ENCODE measurements at regions of chr17 and their contacts with region 1.

Region 1: DNA sequence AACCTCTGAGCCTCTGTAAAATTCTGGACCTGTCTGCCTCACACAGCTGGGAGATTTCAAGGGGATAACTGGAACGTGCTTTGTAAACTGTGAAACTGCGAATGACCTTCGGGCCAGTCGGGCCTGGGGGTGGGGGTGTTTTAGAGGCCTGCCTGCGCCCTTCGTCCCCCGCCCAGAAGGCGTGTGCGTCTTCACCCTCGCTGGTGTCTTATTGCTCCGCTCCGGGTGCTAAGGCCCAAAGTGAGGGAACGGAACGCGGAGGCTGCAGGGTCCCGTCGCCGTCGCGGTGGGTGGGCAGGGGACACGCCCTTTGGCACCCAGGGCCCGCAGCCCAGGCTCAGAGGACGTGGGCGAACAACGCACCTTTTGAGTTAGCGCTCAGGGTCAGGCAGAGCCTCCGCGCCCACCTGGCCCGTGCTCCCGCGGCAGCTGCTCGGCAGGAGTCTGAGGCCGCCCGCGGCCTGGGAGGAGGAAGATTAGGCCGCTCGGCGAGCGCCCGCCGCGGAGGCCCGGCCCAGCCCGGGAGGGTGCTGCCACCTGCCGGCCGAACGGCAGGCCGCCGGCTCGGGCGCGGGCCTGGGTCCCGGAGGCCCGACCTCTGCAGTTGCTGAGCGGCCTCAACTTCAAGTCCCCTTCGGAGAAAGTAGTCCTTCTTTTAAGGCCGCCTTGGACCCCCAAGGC is 29.7 kb downstream of the DCAKD start:
- DNase-seq: peak; percentile 44 to 81
- ATAC-seq: peak; percentile 76 to 86 (median 80)
- H3K4me3 ChIP-seq: peak overlapping the region; percentile 4 to 61 (median 53)
- H3K27ac ChIP-seq: peak overlapping the region in 9 of 10 donors; percentile 61 to 81 (median 71)
- H3K4me1 ChIP-seq: peaks cover 13 to 46% (median 38%) of the 10 kb centered on the region in 9 donors
- H3K27me3 ChIP-seq: peaks cover 0 to 44% (median 0%) of the 10 kb centered on the region in 7 donors
- CTCF ChIP-seq: peak; percentile 77 to 99 (median 92)

Region 2: DNA sequence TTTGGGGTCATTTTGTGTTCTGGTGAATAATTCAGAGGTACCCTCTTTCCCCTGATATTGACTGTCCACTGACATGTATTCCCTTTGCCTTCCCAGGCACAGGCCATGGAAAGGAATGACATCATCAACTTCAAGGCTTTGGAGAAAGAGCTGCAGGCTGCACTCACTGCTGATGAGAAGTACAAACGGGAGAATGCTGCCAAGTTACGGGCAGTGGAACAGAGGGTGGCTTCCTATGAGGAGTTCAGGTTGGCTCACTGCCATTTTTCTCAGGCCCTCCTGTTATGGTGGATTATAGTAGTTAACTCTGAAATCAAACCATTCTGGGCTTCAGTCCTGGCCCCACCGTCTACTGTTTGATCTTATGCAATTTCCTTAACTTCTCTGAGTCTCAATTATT is 120.9 kb before region 1 on chr17:
- intact Hi-C with region 1: loop called in 1 of 10 experiments (anchors 5 kb)
- DNase-seq: no peak
- ATAC-seq: no peak
- H3K4me3 ChIP-seq: no peak overlapping the region
- H3K27ac ChIP-seq: no peak overlapping the region
- H3K4me1 ChIP-seq: peaks cover 0 to 45% (median 27%) of the 10 kb centered on the region in 9 donors
- H3K27me3 ChIP-seq: no peaks in the 10 kb centered on the region
- CTCF ChIP-seq: no peak

Region 3: DNA sequence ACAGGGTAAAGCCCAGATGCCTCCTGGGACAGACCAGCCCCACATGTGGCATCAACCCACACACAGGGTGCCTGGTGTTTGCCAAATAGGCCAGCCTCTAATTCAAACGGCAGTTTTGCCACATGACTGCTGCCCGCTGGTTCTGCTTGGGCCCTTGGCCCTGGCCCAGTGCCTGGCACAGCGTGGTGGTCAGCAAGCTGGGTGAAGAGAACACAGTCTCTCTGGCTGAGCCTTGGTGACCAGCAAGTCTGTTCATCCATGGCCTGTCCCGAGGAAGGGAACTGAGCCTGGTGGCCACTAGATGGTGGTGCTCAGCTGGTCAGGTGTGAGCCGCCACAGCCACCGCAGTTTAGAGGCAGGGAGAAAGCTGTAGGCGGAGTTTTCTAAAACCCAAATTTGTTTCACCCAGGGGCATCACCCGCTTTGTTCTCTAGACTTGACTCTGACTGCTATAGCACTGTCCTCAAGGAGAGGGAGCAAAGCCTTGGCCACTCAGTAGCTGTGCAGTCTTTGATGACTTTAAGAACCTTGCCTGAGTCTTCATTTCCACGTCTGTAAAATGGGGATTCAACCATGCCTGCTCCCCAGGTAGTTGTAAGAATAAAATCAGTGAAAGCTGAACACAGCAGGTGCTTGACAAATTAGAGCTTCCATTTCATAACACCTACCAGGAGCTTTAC is 101.7 kb before region 1 on chr17:
- intact Hi-C with region 1: loop called (anchors 1 to 5 kb)
- DNase-seq: peak; percentile 78 to 80
- ATAC-seq: peak; percentile 71 to 91 (median 84)
- H3K4me3 ChIP-seq: no peak overlapping the region
- H3K27ac ChIP-seq: peak overlapping the region in 7 of 10 donors; percentile 32 to 64 (median 44)
- H3K4me1 ChIP-seq: peaks cover 4 to 48% (median 28%) of the 10 kb centered on the region in 9 donors
- H3K27me3 ChIP-seq: peaks cover 0 to 15% (median 0%) of the 10 kb centered on the region in 7 donors
- CTCF ChIP-seq: peak; percentile 70 to 94 (median 84)

Region 4: DNA sequence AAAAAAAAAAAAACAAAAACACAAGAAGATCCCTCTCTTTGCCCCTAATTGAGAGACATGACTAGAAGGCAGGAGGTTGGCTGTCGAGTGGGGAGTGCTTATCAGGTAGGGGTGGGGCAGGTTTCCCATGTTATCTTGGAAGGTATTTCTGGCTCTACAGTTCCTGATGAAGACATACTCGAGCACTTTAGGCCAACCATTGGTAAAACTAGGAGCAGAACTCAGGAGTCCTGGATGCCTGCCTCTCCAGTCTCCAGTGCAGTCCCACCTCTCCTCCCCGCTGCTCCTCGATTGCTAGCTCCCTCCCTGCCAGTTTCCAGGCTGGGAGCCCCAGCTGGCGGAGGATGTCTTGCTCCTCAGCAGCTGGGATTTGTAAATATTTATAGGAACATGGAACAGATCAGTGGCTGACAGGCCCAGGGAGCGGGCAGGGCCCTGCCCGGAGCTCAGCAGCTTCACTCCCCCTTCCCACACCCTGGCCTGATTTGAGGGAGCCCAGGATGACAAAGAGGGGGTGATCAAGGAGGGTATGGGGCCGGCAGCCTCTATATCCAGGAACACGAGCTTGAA is 42.2 kb before region 1 on chr17:
- intact Hi-C with region 1: loop called in 3 of 10 experiments (anchors 5 kb)
- DNase-seq: peak; percentile 28 to 49
- ATAC-seq: peak; percentile 4 to 73 (median 58)
- H3K4me3 ChIP-seq: no peak overlapping the region
- H3K27ac ChIP-seq: peak overlapping the region in 9 of 10 donors; percentile 53 to 89 (median 81)
- H3K4me1 ChIP-seq: peaks cover 6 to 68% (median 41%) of the 10 kb centered on the region in 9 donors
- H3K27me3 ChIP-seq: peaks cover 0 to 35% (median 10%) of the 10 kb centered on the region in 7 donors
- CTCF ChIP-seq: no peak

Region 5: GRCh38 chr17:45060797-45061605 is 39.3 kb after region 1 on chr17 and contains the start of gene NMT1:
- intact Hi-C with region 1: loop called in 1 of 10 experiments (anchors 2 kb)
- DNase-seq: peak; percentile 95 to 99
- ATAC-seq: peak; percentile 97 to 99 (median 98)
- H3K4me3 ChIP-seq: peak within 1 kb of the TSS; percentile 56 to 93 (median 70)
- H3K27ac ChIP-seq: peak within 1 kb of the TSS; percentile 82 to 97 (median 92)
- H3K4me1 ChIP-seq: peaks cover 19 to 59% (median 47%) of the 10 kb centered on the region in 9 donors
- H3K27me3 ChIP-seq: no peaks in the 10 kb centered on the region
- CTCF ChIP-seq: peak in 3 of 9 donors; percentile 8 to 22 (median 13)
- total RNA-seq, gene NMT1: 60.6 to 110 (median 74.4) TPM

Region 6: GRCh38 chr17:45098869-45099616 is 77.3 kb after region 1 on chr17:
- intact Hi-C with region 1: loop called in 3 of 10 experiments (anchors 2 to 10 kb)
- DNase-seq: peak; percentile 87 to 88
- ATAC-seq: peak; percentile 70 to 86 (median 78)
- H3K4me3 ChIP-seq: no peak overlapping the region
- H3K27ac ChIP-seq: peak overlapping the region in 7 of 10 donors; percentile 6 to 53 (median 18)
- H3K4me1 ChIP-seq: peaks cover 4 to 55% (median 23%) of the 10 kb centered on the region in 9 donors
- H3K27me3 ChIP-seq: no peaks in the 10 kb centered on the region
- CTCF ChIP-seq: peak; percentile 79 to 94 (median 92)